Sigmoid colon (tissue), 7 donors: ENCODE measurements at regions of chr7 and their contacts with region 1.

Region 1: DNA sequence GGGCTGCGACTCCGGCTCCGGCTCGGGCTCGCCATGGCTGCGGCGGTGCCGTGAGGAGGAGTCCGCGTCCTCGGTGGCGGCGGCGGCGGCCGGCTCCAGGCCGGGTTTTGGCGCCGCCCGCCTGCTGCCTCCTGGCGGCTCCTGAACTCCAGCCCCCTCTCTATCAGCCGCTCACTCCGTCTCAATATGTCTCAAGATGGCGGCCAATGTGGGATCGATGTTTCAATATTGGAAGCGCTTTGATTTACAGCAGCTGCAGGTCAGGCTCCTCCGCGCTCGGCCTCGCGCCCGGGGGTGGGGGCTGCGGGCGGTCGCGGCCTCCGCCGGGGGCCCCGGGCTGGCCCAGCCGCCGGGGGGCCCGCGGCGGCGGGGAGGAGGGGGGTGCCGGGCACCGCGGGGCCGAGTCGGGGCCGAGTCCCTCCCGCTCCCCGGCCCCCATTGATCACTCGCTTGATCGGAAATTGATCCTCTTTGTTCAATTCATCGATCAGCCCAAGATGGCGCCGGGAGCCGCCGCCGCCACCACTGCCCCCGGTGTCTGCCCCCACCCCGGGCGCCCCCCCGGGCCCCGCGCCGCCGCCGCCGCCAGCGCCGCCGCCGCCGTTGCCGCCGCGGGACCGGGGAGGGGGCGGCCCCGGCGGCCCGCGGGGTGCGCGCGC is 1.5 kb upstream of the CUX1 start:
- DNase-seq: peak; percentile 86
- H3K4me3 ChIP-seq: peak overlapping the region; percentile 62 to 96 (median 79)
- H3K27ac ChIP-seq: peak overlapping the region; percentile 79 to 87 (median 85)
- H3K4me1 ChIP-seq: peaks cover 4 to 50% (median 35%) of the 10 kb centered on the region in 4 donors
- H3K27me3 ChIP-seq: no peaks in the 10 kb centered on the region
- CTCF ChIP-seq: no peak
- EP300 ChIP-seq: no peak
- POLR2A ChIP-seq: no peak

Region 2: DNA sequence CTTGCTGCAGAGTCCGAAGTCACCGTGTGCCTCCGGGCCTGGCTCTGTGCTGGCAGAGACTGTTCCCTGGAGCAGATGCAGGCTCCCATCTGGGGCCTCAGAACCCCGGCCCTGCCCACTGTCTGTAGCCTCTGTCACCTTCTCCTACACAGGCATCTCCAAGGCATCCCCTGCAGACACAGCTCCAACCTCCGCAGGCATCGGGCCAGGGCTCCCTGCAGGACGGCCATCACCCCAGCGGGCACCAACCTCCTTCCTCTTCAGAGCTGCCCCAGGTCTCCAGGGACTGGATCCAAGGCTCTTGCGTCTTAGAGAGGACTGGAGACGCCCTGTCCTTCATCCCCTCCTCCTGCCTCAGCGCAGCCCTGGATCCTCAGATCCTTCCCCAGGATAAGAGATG is 117.0 kb before region 1 on chr7:
- intact Hi-C with region 1: no loop called
- DNase-seq: no peak
- H3K4me3 ChIP-seq: no peak overlapping the region
- H3K27ac ChIP-seq: no peak overlapping the region
- H3K4me1 ChIP-seq: no peaks in the 10 kb centered on the region
- H3K27me3 ChIP-seq: peaks cover 0 to 23% (median 0%) of the 10 kb centered on the region in 3 donors
- CTCF ChIP-seq: no peak
- EP300 ChIP-seq: no peak
- POLR2A ChIP-seq: no peak

Region 3: DNA sequence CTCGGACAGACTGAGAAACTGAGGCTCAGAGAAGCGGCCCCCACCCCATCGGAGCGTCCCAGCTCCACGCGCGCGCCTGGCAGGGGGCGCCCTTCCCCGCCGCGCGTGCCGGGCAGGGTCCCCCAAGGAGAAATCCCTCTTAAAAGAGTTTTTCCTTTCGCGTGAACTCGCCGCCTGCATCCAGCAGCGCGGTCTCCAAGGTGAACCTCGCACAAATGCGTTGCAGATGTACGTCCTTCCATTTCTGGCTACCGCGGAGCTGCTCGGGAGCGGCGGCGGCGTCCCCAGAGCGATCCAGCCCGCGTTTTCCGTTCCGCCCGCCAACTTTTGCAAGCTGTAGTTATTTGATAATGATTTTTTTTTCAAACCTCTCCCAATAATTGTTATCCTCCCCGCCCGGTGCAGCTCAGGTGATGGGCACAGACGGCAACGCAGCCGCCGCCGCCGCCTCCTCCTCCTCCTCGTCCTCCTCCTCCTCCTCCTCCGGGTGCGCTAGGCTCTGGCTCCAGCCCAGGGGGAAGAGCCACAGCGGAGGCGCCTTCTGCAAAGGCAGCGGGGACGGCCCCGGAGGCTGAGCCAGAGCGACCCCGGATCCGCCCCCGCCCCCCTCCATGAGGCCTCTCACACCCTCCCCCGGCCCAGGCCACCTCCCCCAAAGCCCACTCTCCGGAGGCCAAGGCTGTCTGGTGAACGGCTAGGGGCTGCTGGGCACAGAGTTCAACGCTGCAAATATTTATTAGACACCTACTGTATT is 72.5 kb before region 1 on chr7:
- intact Hi-C with region 1: loop called (anchors 5 kb)
- DNase-seq: peak; percentile 77
- H3K4me3 ChIP-seq: peak overlapping the region; percentile 8 to 48 (median 45)
- H3K27ac ChIP-seq: no peak overlapping the region
- H3K4me1 ChIP-seq: peaks cover 0 to 14% (median 10%) of the 10 kb centered on the region in 4 donors
- H3K27me3 ChIP-seq: peaks cover 2 to 17% (median 3%) of the 10 kb centered on the region in 3 donors
- CTCF ChIP-seq: peak in 3 of 4 experiments; percentile 6 to 63 (median 42)
- EP300 ChIP-seq: no peak
- POLR2A ChIP-seq: no peak

Region 4: DNA sequence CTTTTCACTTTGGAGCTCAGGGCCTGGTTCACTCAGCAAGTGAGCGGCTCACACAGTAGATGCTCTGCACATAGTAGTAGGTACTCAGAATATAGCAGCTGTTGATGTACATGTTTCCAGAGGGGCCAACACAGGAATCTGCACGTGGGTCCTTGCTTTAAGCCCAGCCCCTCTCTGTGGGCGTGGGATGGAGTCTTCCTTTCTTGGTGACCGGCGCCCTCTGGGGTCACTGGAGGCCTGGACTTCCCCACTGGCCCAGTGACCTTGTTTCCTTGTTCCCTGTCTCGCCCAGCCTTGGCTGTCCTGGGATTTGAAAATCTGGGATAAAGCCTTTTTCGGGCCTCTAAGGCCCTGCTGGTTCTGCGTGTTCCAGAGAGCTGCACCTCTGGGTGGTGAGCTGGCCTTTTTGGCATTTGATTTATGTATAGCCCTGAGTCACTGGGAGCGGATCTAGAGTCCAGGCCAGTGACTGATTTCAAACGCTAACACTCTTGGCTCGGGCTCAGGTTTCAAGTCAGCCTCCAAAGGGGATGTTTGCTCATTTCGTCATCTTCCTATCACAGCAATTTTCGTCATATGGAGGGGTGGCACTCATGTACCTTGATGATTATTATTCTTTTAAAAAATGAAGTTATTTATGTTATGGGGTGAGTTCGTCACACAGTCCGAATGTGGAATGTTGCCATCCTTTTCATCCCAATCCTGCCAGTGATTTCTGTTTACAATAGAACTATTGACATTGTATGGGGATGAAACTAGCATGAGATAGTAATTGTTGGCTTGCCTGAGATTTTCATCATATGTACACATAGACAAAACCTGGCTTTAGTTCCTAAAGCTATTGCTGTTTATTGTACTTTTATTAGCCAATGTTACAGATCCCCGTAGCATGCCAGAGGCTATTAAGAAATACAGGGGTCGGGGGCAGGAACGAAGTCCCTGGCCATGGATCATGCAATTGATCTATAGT is 66.9 kb after region 1 on chr7:
- intact Hi-C with region 1: loop called (anchors 2 kb)
- DNase-seq: peak; percentile 97
- H3K4me3 ChIP-seq: no peak overlapping the region
- H3K27ac ChIP-seq: peak overlapping the region; percentile 82 to 93 (median 87)
- H3K4me1 ChIP-seq: peaks cover 0 to 89% (median 78%) of the 10 kb centered on the region in 4 donors
- H3K27me3 ChIP-seq: no peaks in the 10 kb centered on the region
- CTCF ChIP-seq: no peak
- EP300 ChIP-seq: peak; percentile 27 to 80 (median 63)
- POLR2A ChIP-seq: no peak

Region 5: GRCh38 chr7:101941481-101942383 is 125.8 kb after region 1 on chr7:
- intact Hi-C with region 1: loop called (anchors 5 kb)
- DNase-seq: peak; percentile 86
- H3K4me3 ChIP-seq: no peak overlapping the region
- H3K27ac ChIP-seq: peak overlapping the region; percentile 82 to 93 (median 86)
- H3K4me1 ChIP-seq: peaks cover 0 to 92% (median 77%) of the 10 kb centered on the region in 4 donors
- H3K27me3 ChIP-seq: no peaks in the 10 kb centered on the region
- CTCF ChIP-seq: no peak
- EP300 ChIP-seq: peak in 1 of 4 donors; percentile 17
- POLR2A ChIP-seq: no peak

Region 6: GRCh38 chr7:102125127-102125561 is 309.2 kb after region 1 on chr7:
- intact Hi-C with region 1: loop called (anchors 2 kb)
- DNase-seq: peak; percentile 88
- H3K4me3 ChIP-seq: no peak overlapping the region
- H3K27ac ChIP-seq: peak overlapping the region; percentile 49 to 75 (median 68)
- H3K4me1 ChIP-seq: peaks cover 0 to 13% (median 11%) of the 10 kb centered on the region in 4 donors
- H3K27me3 ChIP-seq: no peaks in the 10 kb centered on the region
- CTCF ChIP-seq: peak in 1 of 4 experiments; percentile 14
- EP300 ChIP-seq: peak in 1 of 4 donors; percentile 59
- POLR2A ChIP-seq: no peak